AG04449 (cell line): ENCODE measurements at regions of chr2 and their contacts with region 1.

Region 1: DNA sequence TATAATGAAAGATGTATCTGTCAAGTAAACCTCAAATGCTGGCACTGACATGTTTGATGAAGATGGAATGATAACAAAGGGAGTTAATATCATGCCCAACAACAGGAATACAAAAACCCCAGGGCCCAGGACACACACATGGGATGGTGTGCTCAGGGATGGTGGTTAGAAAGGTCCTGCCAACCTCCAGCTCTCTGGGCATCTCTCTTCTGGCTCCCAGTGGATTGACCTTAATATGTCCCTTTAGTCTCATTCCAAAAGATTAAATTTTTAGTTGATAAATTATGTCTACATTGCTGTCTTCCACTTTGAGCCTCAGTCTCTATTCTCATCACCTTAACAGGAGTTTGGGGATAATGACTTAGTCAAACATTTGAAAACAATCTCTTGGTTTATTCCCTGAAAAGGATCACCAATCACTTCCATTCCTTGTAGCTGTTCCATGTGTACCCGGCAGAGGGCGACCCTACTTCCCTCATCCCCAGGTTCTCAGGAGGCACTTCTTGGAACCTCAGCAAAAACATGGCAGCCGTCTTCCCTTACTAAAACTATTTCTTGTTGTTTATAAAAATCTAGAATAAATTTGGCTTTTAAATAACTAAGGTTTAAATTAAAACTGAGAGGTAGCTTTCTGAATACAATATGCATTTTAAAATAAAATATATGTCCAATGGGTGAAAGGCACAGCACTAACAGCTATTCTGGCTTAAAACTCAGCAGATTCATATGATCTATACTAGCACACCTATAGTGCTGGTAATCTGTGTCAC is 29.6 kb downstream of the MCEE start:
- DNase-seq: no peak
- H3K4me3 ChIP-seq: no peak overlapping the region
- CTCF ChIP-seq: peak; percentile 77

Region 2: DNA sequence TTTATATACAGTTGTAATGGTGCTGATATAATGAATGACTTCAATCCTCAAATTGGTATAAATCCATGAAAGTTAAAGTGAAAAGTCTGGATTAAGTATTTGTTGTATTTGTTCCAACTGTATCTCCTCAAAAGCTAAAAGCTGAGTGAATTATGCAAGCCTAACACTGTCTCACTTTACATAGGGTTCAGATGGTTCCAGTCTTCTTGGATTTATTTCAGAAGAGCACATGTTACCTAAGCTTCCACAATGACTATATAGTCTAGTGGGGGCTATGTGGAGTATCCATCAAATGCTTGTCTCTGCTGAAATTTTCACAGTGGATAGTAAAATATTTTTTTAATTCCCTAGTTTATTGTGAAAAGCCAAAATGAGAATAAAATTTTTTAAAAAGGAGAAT is 16.7 kb after region 1 on chr2:
- CTCF ChIA-PET with region 1: interaction called, 48 read pairs
- POLR2A ChIA-PET with region 1: no interaction called
- DNase-seq: no peak
- H3K4me3 ChIP-seq: no peak overlapping the region
- CTCF ChIP-seq: no peak

Region 3: GRCh38 chr2:71122387-71123298 is 22.3 kb after region 1 on chr2:
- CTCF ChIA-PET with region 1: interaction called, 48 read pairs
- POLR2A ChIA-PET with region 1: no interaction called
- DNase-seq: no peak
- H3K4me3 ChIP-seq: no peak overlapping the region
- CTCF ChIP-seq: no peak

Region 4: DNA sequence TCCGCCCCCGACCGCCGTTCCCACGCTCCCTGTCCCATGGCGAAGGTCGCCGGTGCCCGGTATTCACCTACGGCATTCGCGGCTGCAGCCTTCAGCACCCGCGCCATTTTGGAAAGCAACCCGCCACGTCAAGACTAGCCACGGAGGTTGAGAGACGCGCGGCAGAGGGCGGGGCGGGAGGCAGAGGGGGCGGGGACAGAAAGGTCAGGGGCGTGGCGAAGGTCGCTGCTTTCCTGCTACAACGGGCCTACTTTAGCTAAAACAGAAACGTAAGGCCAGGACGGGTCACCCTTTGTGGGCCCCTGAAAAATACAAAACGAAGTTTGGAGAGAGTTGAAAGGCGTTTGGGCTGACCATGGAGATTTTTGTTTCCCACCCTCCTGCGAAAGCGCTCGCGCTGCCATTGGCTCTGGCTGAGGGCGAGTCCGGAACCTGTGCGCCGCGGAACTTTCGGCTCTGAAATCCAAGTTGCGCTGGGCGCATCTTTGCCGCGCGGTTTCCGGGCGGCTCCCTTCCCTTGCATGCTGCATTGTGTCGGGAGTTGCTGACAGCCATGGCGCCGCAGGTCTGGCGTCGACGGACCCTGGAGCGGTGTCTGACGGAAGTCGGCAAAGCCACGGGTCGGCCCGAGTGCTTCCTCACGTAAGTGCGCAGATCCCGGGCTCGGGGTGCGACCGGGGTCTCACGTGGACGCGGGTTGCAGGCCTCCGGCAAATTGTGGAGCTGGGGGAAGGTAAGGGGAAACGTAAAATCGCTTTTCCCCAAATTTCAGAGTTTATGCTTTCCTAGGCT is 29.9 kb after region 1 on chr2 and contains the starts of genes MCEE and MPHOSPH10:
- CTCF ChIA-PET with region 1: interaction called, 14 read pairs
- POLR2A ChIA-PET with region 1: interaction called, 3 read pairs
- DNase-seq: peak; percentile 37
- H3K4me3 ChIP-seq: peak within 1 kb of the TSS; percentile 98
- CTCF ChIP-seq: no peak

Region 5: GRCh38 chr2:71157124-71157793 is 56.9 kb after region 1 on chr2:
- CTCF ChIA-PET with region 1: interaction called, 18 read pairs
- POLR2A ChIA-PET with region 1: no interaction called
- DNase-seq: no peak
- H3K4me3 ChIP-seq: peak overlapping the region; percentile 38
- CTCF ChIP-seq: peak; percentile 60

Region 6: DNA sequence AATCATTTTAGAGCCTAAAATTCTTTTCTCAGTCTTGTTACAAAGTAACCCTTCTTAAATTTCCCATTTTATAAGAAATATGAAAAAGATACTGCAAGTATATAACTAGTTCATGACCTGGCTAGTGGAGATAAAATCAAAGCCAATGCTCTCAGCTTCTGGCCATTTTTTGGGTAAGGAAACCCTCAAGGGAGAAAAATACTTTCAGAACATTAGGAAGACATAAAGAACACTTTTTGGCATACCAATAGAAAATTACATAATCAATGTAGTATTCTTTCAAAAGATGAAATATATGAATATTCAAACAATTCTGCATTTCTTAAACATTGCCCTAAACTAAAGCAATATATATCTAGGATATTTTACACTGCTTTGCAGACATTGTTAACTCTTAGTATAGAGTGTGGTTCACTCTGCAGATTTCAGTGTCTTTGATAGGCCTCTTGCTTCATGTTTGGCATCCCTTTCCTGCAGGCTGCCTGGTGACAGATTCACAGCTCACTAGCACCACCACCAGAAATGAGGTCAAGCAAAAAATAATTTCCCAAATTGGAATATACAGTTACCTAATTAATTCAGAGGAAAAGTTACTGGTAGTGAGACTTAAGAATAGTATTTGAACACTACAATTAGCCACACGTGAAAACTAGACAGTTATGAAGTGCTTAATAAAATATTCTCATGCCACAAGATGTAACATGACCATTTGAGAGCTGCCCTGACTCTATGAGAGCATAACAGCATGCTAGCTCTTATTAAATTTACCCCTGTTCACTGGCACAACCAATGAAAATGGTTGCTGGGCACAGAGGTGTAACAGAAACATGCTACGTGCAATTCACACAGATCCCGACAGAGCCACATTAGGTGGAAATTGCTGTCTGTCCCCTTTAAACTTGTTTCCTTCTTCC is 90.5 kb after region 1 on chr2:
- CTCF ChIA-PET with region 1: interaction called, 30 read pairs
- POLR2A ChIA-PET with region 1: no interaction called
- DNase-seq: no peak
- H3K4me3 ChIP-seq: no peak overlapping the region
- CTCF ChIP-seq: peak; percentile 23

Region 7: GRCh38 chr2:71471276-71471675 is 370.9 kb after region 1 on chr2:
- CTCF ChIA-PET with region 1: no interaction called
- POLR2A ChIA-PET with region 1: no interaction called
- DNase-seq: peak; percentile 36
- H3K4me3 ChIP-seq: no peak overlapping the region
- CTCF ChIP-seq: no peak